CD4-positive, alpha-beta T cell (primary cell): ENCODE measurements at regions of chr1 and their contacts with region 1.

Region 1: DNA sequence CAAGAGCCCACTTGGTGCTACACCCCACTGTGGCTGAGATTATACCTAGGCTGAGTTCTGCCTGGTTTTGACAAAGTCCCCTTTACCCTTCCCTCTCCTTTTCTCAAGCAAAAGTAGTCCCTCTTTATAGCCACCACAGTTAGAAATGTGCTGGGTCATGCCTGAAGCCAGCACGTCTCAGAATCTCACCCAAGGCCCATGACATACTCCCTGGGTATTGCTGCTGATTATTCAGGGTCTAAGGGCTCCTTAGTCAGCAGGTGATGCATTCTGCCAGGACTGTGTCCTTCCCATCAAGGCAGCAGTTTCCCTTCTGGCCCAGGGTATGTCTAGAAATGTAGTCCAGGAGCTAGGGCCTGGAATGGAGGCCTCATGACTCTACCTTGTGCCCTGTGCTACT is 67.3 kb upstream of the COX20 start:
- DNase-seq: no peak
- ATAC-seq: no peak
- H3K4me3 ChIP-seq: no peak overlapping the region
- H3K4me3 Mint-ChIP-seq: no peak overlapping the region
- H3K27ac ChIP-seq: no peak overlapping the region
- H3K27ac Mint-ChIP-seq: no peak overlapping the region
- H3K4me1 ChIP-seq: no peaks in the 10 kb centered on the region
- H3K4me1 Mint-ChIP-seq: no peaks in the 10 kb centered on the region
- H3K27me3 ChIP-seq: peaks cover 0 to 4% of the 10 kb centered on the region in 2 experiments
- H3K27me3 Mint-ChIP-seq: peaks cover 20% of the 10 kb centered on the region
- CTCF ChIP-seq: no peak

Region 2: GRCh38 chr1:244628789-244629188 is 139.4 kb before region 1 on chr1:
- CTCF ChIA-PET with region 1: no interaction called
- POLR2A ChIA-PET with region 1: no interaction called
- intact Hi-C with region 1: loop called in 1 of 2 experiments (anchors 2 kb)
- DNase-seq: no peak
- ATAC-seq: no peak
- H3K4me3 ChIP-seq: no peak overlapping the region
- H3K4me3 Mint-ChIP-seq: no peak overlapping the region
- H3K27ac ChIP-seq: no peak overlapping the region
- H3K27ac Mint-ChIP-seq: no peak overlapping the region
- H3K4me1 ChIP-seq: no peaks in the 10 kb centered on the region
- H3K4me1 Mint-ChIP-seq: no peaks in the 10 kb centered on the region
- H3K27me3 ChIP-seq: no peaks in the 10 kb centered on the region
- H3K27me3 Mint-ChIP-seq: peaks cover 13% of the 10 kb centered on the region
- CTCF ChIP-seq: no peak